Dendritic cell treated with granulocyte-macrophage colony-stimulating factor and Interleukin-4, amounts not matched to agents 40 ng/mL and 50 ng/mL, for 4 days (primary cell): ENCODE measurements at regions of chr14 and their contacts with region 1.

Region 1: GRCh38 chr14:68788996-68789820 is 3.7 kb downstream of the ZFP36L1 start:
- H3K4me3 Mint-ChIP-seq: peak overlapping the region; percentile 99
- H3K27ac Mint-ChIP-seq: peak overlapping the region; percentile 100
- H3K4me1 Mint-ChIP-seq: peaks cover 57% of the 10 kb centered on the region
- H3K27me3 Mint-ChIP-seq: no peaks in the 10 kb centered on the region

Region 2: DNA sequence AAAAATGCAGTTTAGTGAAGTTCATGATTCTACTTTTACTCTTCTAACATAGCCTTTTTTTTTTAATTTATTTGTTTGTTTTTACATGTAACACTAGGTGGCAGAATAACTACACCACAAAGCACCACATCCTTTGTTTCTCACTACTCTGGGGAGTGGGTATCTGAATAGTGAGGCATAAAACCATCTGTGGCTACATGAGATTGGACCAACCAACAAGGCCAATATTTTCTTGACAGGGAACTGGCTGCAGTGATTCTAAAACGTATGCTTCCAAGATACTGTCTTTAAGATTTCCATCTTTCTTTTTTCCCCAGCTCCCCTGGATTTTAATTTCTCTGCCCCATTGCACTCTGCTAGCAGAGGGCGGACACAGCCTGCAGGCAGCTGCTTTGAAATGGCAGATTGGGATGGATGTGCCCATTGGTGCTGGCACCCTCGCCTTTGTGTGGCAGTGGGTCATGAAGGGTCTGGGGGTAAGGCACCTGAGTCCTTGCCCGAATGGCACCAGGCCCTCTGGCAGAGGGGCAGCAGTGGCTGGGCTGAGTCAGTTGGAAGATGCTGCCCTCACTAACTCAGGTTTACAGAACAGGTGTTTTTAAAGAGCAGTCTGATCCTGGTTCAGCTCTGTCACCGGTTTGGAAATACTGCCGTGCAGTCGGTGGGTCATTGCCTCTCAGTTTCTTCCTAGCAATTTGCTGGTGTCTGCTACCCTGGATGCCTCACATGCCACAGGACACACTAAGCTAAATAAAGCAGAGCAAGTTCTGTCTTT is 540.5 kb before region 1 on chr14:
- intact Hi-C with region 1: loop called (anchors 2 kb)
- H3K4me3 Mint-ChIP-seq: no peak overlapping the region
- H3K27ac Mint-ChIP-seq: peak overlapping the region; percentile 78
- H3K4me1 Mint-ChIP-seq: peaks cover 59% of the 10 kb centered on the region
- H3K27me3 Mint-ChIP-seq: no peaks in the 10 kb centered on the region

Region 3: GRCh38 chr14:68476212-68476907 is 312.8 kb before region 1 on chr14:
- intact Hi-C with region 1: loop called (anchors 10 kb)
- H3K4me3 Mint-ChIP-seq: no peak overlapping the region
- H3K27ac Mint-ChIP-seq: peak overlapping the region; percentile 78
- H3K4me1 Mint-ChIP-seq: peaks cover 56% of the 10 kb centered on the region
- H3K27me3 Mint-ChIP-seq: no peaks in the 10 kb centered on the region

Region 4: GRCh38 chr14:68577827-68578541 is 211.2 kb before region 1 on chr14:
- intact Hi-C with region 1: loop called (anchors 5 kb)
- H3K4me3 Mint-ChIP-seq: peak overlapping the region; percentile 55
- H3K27ac Mint-ChIP-seq: peak overlapping the region; percentile 96
- H3K4me1 Mint-ChIP-seq: peaks cover 78% of the 10 kb centered on the region
- H3K27me3 Mint-ChIP-seq: no peaks in the 10 kb centered on the region

Region 5: GRCh38 chr14:68607081-68607886 is 181.9 kb before region 1 on chr14:
- intact Hi-C with region 1: loop called (anchors 10 kb)
- H3K4me3 Mint-ChIP-seq: peak overlapping the region; percentile 2
- H3K27ac Mint-ChIP-seq: no peak overlapping the region
- H3K4me1 Mint-ChIP-seq: peaks cover 6% of the 10 kb centered on the region
- H3K27me3 Mint-ChIP-seq: no peaks in the 10 kb centered on the region

Region 6: DNA sequence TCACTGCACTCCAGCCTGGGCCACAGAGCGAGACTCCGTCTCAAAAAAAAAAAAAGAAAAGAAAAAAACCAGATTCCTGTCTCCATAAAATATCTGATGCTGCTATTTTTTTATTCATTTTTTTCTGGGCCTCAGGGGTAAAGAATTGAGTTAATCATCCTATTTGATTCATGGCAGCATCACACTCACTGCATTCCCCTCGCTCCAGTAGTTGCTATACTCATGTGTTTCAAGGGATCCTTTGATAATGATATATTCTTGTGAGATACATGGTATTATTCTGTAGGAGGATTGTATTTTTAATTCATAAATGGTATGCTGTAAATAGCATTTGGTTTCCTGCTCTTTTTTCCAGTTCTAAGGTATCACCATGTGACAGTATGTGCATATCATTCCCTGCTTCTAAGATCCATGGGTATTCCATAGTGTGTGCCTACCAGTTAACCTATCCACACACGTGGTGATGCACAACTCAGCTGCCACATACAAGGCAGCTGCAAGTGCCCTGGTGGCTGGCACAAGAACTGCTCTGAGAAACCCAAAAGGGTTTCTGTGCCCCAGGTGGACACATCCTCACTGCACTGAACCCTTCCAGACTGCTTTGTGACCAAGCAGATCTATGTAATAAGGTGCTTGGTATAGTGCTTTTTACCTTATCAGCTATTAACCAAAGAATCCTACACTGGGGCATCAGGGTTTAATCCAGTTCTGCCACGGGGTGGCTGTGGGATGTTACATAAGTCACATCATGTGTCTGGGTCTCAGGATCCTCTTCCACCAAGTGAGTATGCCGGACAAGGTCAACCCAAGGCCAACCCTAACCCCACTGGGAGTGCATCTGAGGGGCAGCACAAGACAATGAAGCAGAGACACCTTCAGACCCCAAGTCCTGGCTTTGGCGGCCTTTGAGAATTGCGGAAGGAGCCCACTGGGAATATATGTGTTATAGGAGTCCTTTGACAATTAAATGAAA is 70.9 kb before region 1 on chr14:
- intact Hi-C with region 1: loop called (anchors 5 kb)
- H3K4me3 Mint-ChIP-seq: no peak overlapping the region
- H3K27ac Mint-ChIP-seq: no peak overlapping the region
- H3K4me1 Mint-ChIP-seq: peaks cover 44% of the 10 kb centered on the region
- H3K27me3 Mint-ChIP-seq: peaks cover 12% of the 10 kb centered on the region

Region 7: DNA sequence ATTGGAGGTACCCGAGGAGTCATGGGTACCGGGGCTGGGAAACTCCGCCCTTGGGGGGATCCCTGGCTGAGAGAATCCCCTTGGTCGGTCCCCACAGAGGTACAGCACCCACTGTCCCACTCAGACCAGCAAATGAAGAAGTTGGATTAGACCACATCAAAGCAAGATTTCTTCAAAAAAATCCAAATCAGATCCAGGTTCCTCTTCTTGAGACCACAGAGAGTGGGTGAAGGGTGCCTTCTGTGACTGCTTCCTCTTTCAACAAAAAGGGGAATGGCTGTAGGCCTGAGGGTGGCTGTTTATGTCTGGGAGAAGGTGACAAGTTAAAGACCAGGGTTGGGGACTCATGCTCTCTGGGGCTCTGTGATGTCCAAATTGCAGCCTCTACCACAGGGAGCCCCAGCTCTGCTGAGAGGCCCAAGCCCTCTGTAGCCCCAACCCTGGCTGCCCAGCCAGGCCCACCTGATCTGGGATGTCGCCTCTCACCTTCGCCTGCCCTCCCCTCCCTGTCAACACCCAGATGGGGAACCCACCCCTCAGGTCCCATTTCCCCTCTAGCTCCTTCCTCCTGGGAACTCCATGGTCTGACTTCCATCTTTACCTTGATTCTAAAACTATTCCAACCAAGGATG is 47.3 kb before region 1 on chr14:
- intact Hi-C with region 1: loop called (anchors 5 kb)
- H3K4me3 Mint-ChIP-seq: no peak overlapping the region
- H3K27ac Mint-ChIP-seq: peak overlapping the region; percentile 91
- H3K4me1 Mint-ChIP-seq: peaks cover 71% of the 10 kb centered on the region
- H3K27me3 Mint-ChIP-seq: peaks cover 44% of the 10 kb centered on the region

Region 8: GRCh38 chr14:69519204-69520100 is 730.2 kb after region 1 on chr14:
- intact Hi-C with region 1: no loop called
- H3K4me3 Mint-ChIP-seq: no peak overlapping the region
- H3K27ac Mint-ChIP-seq: no peak overlapping the region
- H3K4me1 Mint-ChIP-seq: no peaks in the 10 kb centered on the region
- H3K27me3 Mint-ChIP-seq: peaks cover 24% of the 10 kb centered on the region